ENCODE measurements at regions of chr10 and their contacts with region 1.

Region 1: GRCh38 chr10:68955832-68956532 is at the start of gene DDX21:
- DNase-seq: peak; percentile 73 to 95 (median 82)
- ATAC-seq: peak; percentile 80
- H3K4me3 ChIP-seq: peak within 1 kb of the TSS; percentile 97
- H3K4me3 Mint-ChIP-seq: peak within 1 kb of the TSS; percentile 95
- H3K27ac ChIP-seq: peak within 1 kb of the TSS; percentile 98 to 100
- H3K27ac Mint-ChIP-seq: peak within 1 kb of the TSS; percentile 94
- H3K4me1 ChIP-seq: peaks cover 45% of the 10 kb centered on the region
- H3K4me1 Mint-ChIP-seq: peaks cover 44% of the 10 kb centered on the region
- H3K27me3 ChIP-seq: no peaks in the 10 kb centered on the region
- H3K27me3 Mint-ChIP-seq: no peaks in the 10 kb centered on the region
- CTCF ChIP-seq: peak; percentile 87
- total RNA-seq, gene DDX21: 120 to 121 TPM

Region 2: DNA sequence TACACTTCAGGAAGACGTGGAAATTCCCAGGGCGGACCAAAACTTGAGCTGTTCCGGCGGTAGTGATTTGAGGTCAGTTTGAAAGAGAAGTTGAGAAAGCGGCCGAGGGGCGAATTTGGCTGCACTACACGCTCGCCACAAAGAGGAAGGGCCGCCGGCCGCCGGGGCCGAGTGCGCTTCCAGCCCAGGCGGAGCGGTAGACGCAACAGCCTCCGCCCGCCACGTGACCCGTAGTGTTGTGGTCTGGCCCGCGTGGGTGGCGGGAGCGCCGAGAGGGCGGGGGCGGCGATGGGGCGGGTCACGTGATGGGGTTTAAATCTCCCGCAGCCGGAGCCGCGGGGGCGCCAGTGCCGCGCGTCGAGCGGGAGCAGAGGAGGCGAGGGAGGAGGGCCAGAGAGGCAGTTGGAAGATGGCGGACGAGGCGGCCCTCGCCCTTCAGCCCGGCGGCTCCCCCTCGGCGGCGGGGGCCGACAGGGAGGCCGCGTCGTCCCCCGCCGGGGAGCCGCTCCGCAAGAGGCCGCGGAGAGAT is 1071.6 kb before region 1 on chr10 and contains the start of gene SIRT1:
- CTCF ChIA-PET with region 1: no interaction called
- POLR2A ChIA-PET with region 1: no interaction called
- intact Hi-C with region 1: loop called in 1 of 2 experiments (anchors 10 kb)
- DNase-seq: peak; percentile 88 to 97 (median 92)
- ATAC-seq: peak; percentile 70
- H3K4me3 ChIP-seq: peak within 1 kb of the TSS; percentile 87
- H3K4me3 Mint-ChIP-seq: peak within 1 kb of the TSS; percentile 95
- H3K27ac ChIP-seq: peak within 1 kb of the TSS; percentile 78 to 82
- H3K27ac Mint-ChIP-seq: peak within 1 kb of the TSS; percentile 91
- H3K4me1 ChIP-seq: peaks cover 24% of the 10 kb centered on the region
- H3K4me1 Mint-ChIP-seq: peaks cover 46% of the 10 kb centered on the region
- H3K27me3 ChIP-seq: no peaks in the 10 kb centered on the region
- H3K27me3 Mint-ChIP-seq: no peaks in the 10 kb centered on the region
- CTCF ChIP-seq: no peak
- total RNA-seq, gene SIRT1: 57.6 to 62.9 TPM

Region 3: GRCh38 chr10:68720793-68721672 is 234.9 kb before region 1 on chr10 and contains the start of gene CCAR1:
- CTCF ChIA-PET with region 1: no interaction called
- POLR2A ChIA-PET with region 1: interaction called, 4 read pairs
- intact Hi-C with region 1: loop called in 1 of 2 experiments (anchors 5 kb)
- DNase-seq: peak; percentile 92 to 99 (median 96)
- ATAC-seq: peak; percentile 94
- H3K4me3 ChIP-seq: peak within 1 kb of the TSS; percentile 93
- H3K4me3 Mint-ChIP-seq: peak within 1 kb of the TSS; percentile 100
- H3K27ac ChIP-seq: peak within 1 kb of the TSS; percentile 85 to 89
- H3K27ac Mint-ChIP-seq: peak within 1 kb of the TSS; percentile 98
- H3K4me1 ChIP-seq: peaks cover 16% of the 10 kb centered on the region
- H3K4me1 Mint-ChIP-seq: peaks cover 16% of the 10 kb centered on the region
- H3K27me3 ChIP-seq: no peaks in the 10 kb centered on the region
- H3K27me3 Mint-ChIP-seq: no peaks in the 10 kb centered on the region
- CTCF ChIP-seq: no peak
- total RNA-seq, gene CCAR1: 68.9 to 82.2 TPM

Region 4: DNA sequence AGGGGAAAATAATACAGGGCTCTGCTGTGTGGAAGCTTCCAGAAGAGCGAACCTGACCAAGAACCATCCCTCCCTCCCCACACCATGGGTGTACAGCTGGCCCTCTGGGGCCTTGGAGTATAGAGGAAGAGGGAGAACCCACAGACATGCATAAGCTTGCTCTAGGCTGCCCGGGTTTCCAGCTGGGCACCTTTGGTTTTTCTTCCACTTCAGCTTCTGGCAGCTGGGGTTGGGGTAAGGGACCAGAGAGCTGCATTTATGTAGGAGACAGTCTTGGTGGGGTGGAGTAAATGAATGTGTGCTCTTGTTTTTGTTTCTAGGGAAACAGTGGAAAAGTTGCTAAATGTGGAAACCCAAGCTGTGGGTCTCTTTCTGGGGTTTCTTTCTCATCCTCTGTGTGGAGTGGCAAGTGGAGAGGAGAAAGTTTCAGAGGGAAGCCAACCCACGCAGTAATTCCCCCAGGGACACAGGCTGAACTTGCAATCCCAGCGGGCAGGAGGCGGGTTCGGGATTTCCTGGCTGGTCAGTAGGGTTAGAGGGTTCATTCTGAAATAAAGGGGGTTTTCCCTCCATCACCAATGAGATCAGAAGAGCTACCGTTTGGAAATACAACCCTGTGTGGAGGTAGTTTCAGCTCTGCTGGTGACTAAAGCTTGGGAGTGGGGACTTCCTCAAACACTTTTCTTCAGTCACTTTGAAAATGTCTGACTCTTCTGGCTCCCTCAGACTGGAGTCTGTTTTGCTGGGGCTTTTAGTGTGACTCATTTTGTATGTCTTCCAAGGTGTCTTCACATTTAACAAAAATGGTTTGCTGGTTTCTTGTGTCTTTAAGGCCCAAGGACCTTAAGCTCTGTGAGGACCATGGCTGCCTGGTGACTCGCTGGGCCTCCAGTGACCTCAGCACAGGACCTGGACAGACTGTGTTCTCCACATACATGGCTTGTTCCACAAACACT is 109.7 kb after region 1 on chr10:
- CTCF ChIA-PET with region 1: no interaction called
- POLR2A ChIA-PET with region 1: no interaction called
- intact Hi-C with region 1: no loop called
- DNase-seq: peak in 2 of 14 experiments; percentile 69 to 76
- ATAC-seq: peak; percentile 27
- H3K4me3 ChIP-seq: no peak overlapping the region
- H3K4me3 Mint-ChIP-seq: no peak overlapping the region
- H3K27ac ChIP-seq: no peak overlapping the region
- H3K27ac Mint-ChIP-seq: no peak overlapping the region
- H3K4me1 ChIP-seq: peaks cover 21% of the 10 kb centered on the region
- H3K4me1 Mint-ChIP-seq: peaks cover 26% of the 10 kb centered on the region
- H3K27me3 ChIP-seq: no peaks in the 10 kb centered on the region
- H3K27me3 Mint-ChIP-seq: no peaks in the 10 kb centered on the region
- CTCF ChIP-seq: no peak

Region 5: DNA sequence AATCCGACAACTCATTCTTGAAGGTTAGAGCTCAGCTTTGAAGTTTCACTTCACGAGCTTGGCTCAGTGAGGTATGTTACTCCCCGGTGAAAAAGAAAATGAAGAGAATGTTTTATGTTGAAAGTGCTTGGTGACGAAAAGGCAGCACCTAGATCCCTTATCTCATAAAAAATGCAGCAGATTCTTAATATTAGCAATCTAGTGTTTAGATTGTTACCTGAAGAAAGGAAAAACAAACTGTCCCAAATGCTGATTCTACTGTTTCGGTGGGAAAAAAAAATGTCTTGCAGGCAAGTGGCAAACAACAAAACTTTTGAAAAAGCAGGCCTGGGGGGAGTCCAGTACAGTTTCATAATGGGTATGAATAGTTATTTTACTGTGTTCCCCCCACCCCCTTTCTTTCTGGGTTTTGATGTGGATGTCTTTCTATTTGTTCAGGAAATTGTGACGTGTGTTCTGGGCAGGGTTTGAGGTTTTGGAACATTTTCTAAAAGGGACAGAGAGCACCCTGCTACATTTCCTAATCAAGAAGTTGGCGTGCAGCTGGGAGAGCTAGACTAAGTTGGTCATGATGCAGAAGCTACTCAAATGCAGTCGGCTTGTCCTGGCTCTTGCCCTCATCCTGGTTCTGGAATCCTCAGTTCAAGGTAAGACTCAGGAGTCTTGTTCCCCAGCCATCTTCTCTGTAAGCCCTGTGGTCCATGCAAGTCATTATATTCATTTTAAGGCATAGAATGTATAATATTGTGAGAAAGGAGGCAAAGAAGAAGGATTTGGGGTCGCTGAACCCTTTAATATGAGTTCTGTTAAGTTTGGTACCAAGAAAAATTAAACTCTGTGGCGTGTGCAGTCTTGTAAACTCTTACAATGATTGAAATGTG is 131.8 kb after region 1 on chr10 and contains the start of gene SRGN:
- CTCF ChIA-PET with region 1: no interaction called
- POLR2A ChIA-PET with region 1: interaction called, 20 read pairs
- intact Hi-C with region 1: loop called (anchors 1 to 2 kb)
- DNase-seq: peak; percentile 52 to 97 (median 60)
- ATAC-seq: peak; percentile 56
- H3K4me3 ChIP-seq: peak within 1 kb of the TSS; percentile 59
- H3K4me3 Mint-ChIP-seq: peak within 1 kb of the TSS; percentile 88
- H3K27ac ChIP-seq: peak within 1 kb of the TSS; percentile 94 to 98
- H3K27ac Mint-ChIP-seq: peak within 1 kb of the TSS; percentile 94
- H3K4me1 ChIP-seq: peaks cover 52% of the 10 kb centered on the region
- H3K4me1 Mint-ChIP-seq: peaks cover 62% of the 10 kb centered on the region
- H3K27me3 ChIP-seq: no peaks in the 10 kb centered on the region
- H3K27me3 Mint-ChIP-seq: no peaks in the 10 kb centered on the region
- CTCF ChIP-seq: no peak
- total RNA-seq, gene SRGN: 342 to 353 TPM

Region 6: DNA sequence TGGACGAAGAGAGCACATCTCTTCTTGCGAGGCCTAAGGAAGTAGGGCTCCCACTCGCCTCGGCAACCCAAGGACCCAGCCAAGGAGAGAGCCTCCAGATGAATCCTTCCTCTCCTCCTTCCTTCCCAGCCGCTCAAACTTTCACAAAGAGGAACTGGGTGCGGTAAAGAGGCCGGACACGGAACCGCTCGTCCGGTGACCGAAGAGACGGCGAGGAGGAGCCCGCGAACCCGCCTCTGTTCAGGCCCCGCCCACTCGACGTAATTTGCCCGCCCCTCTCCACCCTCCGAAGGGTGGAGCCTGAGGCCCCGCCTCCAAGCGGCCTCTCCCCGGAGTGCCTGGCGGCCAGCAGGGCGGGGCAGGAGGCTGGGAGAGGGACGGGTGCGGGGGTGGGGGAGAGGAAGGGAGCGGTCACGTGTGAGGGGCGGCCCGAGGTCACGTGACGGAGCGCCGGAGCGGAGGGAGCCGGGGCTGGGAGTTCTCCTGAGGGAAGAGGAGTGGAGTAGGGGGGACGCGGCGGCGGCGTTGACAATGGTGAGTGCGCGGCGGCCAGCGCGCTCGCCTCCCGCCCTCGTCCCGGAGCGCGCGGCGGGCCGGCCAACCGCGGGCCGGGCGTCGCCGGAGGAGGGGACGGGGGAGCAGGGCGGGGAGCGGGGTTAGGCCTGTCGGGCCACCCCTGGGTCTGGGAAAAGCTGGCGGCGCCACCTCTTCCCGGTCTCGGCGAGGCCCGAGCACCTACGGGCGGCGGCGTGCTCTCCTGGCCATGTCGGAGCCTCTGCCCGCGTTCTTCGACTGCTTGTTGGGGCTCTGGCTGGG is 168.0 kb after region 1 on chr10 and contains the start of gene VPS26A:
- CTCF ChIA-PET with region 1: interaction called, 4 read pairs
- POLR2A ChIA-PET with region 1: interaction called, 9 read pairs
- intact Hi-C with region 1: loop called (anchors 1 to 2 kb)
- DNase-seq: peak; percentile 97 to 99 (median 98)
- ATAC-seq: peak; percentile 94
- H3K4me3 ChIP-seq: peak within 1 kb of the TSS; percentile 90
- H3K4me3 Mint-ChIP-seq: peak within 1 kb of the TSS; percentile 97
- H3K27ac ChIP-seq: peak within 1 kb of the TSS; percentile 92 to 95
- H3K27ac Mint-ChIP-seq: peak within 1 kb of the TSS; percentile 98
- H3K4me1 ChIP-seq: peaks cover 35% of the 10 kb centered on the region
- H3K4me1 Mint-ChIP-seq: peaks cover 27% of the 10 kb centered on the region
- H3K27me3 ChIP-seq: no peaks in the 10 kb centered on the region
- H3K27me3 Mint-ChIP-seq: no peaks in the 10 kb centered on the region
- CTCF ChIP-seq: peak; percentile 48
- total RNA-seq, gene VPS26A: 32.8 to 33.0 TPM

Measured in CD4-positive, alpha-beta T cell (primary cell).